Activated CD8-positive, alpha-beta T cell treated with anti-CD3 and anti-CD28 coated beads, Interleukin-2, amount 10 ng/mL, durations not matched to agents 7 days and 5 days (primary cell): ENCODE measurements at regions of chr10 and their contacts with region 1.

Region 1: GRCh38 chr10:1056326-1057105 is at the start of gene WDR37:
- DNase-seq: peak; percentile 91
- ATAC-seq: peak; percentile 90
- H3K4me3 Mint-ChIP-seq: peak within 1 kb of the TSS; percentile 97
- H3K27ac Mint-ChIP-seq: peak within 1 kb of the TSS; percentile 97
- H3K4me1 Mint-ChIP-seq: peaks cover 78% of the 10 kb centered on the region
- H3K27me3 Mint-ChIP-seq: no peaks in the 10 kb centered on the region
- total RNA-seq, gene WDR37: 24.9 to 27.0 TPM

Region 2: GRCh38 chr10:931416-932318 is 124.8 kb before region 1 on chr10 and contains the start of gene LARP4B:
- CTCF ChIA-PET with region 1: no interaction called
- POLR2A ChIA-PET with region 1: interaction called, 12 read pairs
- DNase-seq: peak; percentile 97
- ATAC-seq: peak; percentile 98
- H3K4me3 Mint-ChIP-seq: peak within 1 kb of the TSS; percentile 96
- H3K27ac Mint-ChIP-seq: peak within 1 kb of the TSS; percentile 96
- H3K4me1 Mint-ChIP-seq: peaks cover 36% of the 10 kb centered on the region
- H3K27me3 Mint-ChIP-seq: no peaks in the 10 kb centered on the region
- total RNA-seq, gene LARP4B: 107 to 108 TPM

Region 3: DNA sequence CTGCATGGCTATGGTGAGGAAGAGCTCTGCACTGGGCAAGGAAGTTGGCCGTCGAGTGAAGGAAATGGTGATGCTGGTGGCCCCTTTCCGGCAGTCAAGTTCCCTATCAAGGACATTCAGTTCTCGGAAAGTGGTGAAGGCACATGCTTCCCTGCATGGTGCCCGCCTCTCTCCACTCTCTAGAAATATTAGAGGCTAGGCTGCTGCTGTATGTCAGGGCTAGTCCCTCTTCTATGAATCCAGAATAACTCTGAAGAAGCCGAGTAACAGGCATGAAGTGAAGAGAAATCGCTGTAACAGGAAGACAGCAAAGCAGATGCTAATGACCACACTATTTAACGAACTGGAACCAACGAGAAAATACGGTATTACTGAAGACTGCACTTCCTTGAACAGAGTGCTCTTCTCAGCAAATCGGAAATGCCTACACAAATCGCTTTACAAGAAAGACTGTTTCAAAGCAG is 13.0 kb before region 1 on chr10:
- CTCF ChIA-PET with region 1: interaction called, 6 read pairs
- POLR2A ChIA-PET with region 1: interaction called, 23 read pairs
- DNase-seq: peak; percentile 41
- ATAC-seq: peak; percentile 31
- H3K4me3 Mint-ChIP-seq: peak overlapping the region; percentile 67
- H3K27ac Mint-ChIP-seq: peak overlapping the region; percentile 92
- H3K4me1 Mint-ChIP-seq: peaks cover 53% of the 10 kb centered on the region
- H3K27me3 Mint-ChIP-seq: no peaks in the 10 kb centered on the region

Region 4: DNA sequence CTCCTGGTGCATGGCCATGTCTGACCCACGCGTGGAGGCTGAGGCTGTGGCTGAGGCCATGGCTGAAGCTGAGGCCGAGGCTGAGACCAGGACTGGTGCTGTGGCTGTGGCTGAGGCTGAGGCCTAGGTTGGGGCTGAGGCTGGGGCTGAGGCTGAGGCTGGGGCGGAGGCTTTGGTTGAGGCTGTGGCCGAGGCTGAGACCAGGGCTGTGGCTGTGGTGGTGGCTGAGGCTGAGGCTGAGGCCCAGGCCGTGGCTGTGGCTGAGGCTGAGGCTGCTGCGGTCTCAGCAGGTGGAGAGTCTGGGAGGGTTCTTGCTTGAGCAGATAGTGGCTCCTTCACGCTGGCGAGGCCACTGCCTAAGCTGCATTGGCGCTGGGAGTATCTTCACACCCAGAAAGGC is 76.1 kb after region 1 on chr10:
- CTCF ChIA-PET with region 1: no interaction called
- POLR2A ChIA-PET with region 1: no interaction called
- DNase-seq: peak; percentile 18
- ATAC-seq: peak; percentile 36
- H3K4me3 Mint-ChIP-seq: no peak overlapping the region
- H3K27ac Mint-ChIP-seq: no peak overlapping the region
- H3K4me1 Mint-ChIP-seq: peaks cover 28% of the 10 kb centered on the region
- H3K27me3 Mint-ChIP-seq: peaks cover 4% of the 10 kb centered on the region